ENCODE measurements at regions of chr11 and their contacts with region 1.

Region 1: DNA sequence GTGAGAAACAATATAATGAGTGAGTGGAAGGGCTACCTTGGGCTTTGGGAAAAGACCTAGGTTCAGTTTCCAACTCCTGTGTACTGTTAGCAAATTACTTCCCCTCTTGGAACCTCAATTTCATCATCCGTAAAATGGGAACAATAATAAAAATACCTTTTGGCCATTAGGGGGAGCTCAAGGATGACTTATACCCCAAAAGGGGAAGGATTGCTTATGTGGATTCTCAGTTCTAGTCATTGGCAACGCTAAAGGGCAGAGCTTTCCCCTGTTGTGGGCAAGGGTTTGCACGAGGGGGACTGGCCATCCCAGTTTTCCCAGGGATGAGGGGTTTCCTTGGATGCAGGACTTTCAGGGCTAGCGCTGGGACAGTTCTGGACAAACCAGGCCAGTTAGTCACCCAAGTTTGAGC is 3.1 kb upstream of the COMMD9 start:
- DNase-seq: peak; percentile 73
- CTCF ChIP-seq: peak; percentile 64

Region 2: GRCh38 chr11:36478700-36479329 is 186.5 kb after region 1 on chr11:
- in situ Hi-C with region 1: loop called (anchors 10 kb)
- DNase-seq: peak; percentile 29
- CTCF ChIP-seq: peak; percentile 52

Region 3: GRCh38 chr11:36803084-36803483 is 510.8 kb after region 1 on chr11:
- in situ Hi-C with region 1: no loop called
- DNase-seq: no peak
- CTCF ChIP-seq: no peak

Measured in GM13977 (cell line).